PC-3 (cell line): ENCODE measurements at regions of chr17 and their contacts with region 1.

Region 1: GRCh38 chr17:6215071-6216035 is 145.2 kb downstream of the WSCD1 start:
- DNase-seq: no peak
- ATAC-seq: no peak
- H3K4me3 ChIP-seq: no peak overlapping the region
- H3K27ac ChIP-seq: no peak overlapping the region
- H3K4me1 ChIP-seq: no peaks in the 10 kb centered on the region
- H3K27me3 ChIP-seq: no peaks in the 10 kb centered on the region
- CTCF ChIP-seq: no peak

Region 2: GRCh38 chr17:6137716-6138502 is 77.4 kb before region 1 on chr17:
- CTCF ChIA-PET with region 1: no interaction called
- POLR2A ChIA-PET with region 1: no interaction called
- intact Hi-C with region 1: no loop called
- DNase-seq: no peak
- ATAC-seq: no peak
- H3K4me3 ChIP-seq: no peak overlapping the region
- H3K27ac ChIP-seq: no peak overlapping the region
- H3K4me1 ChIP-seq: no peaks in the 10 kb centered on the region
- H3K27me3 ChIP-seq: no peaks in the 10 kb centered on the region
- CTCF ChIP-seq: no peak

Region 3: GRCh38 chr17:6191405-6192324 is 23.7 kb before region 1 on chr17:
- CTCF ChIA-PET with region 1: no interaction called
- POLR2A ChIA-PET with region 1: no interaction called
- intact Hi-C with region 1: no loop called
- DNase-seq: no peak
- ATAC-seq: no peak
- H3K4me3 ChIP-seq: no peak overlapping the region
- H3K27ac ChIP-seq: no peak overlapping the region
- H3K4me1 ChIP-seq: peaks cover 27% of the 10 kb centered on the region
- H3K27me3 ChIP-seq: no peaks in the 10 kb centered on the region
- CTCF ChIP-seq: no peak

Region 4: GRCh38 chr17:6366221-6366666 is 150.9 kb after region 1 on chr17:
- CTCF ChIA-PET with region 1: no interaction called
- POLR2A ChIA-PET with region 1: no interaction called
- intact Hi-C with region 1: loop called (anchors 5 kb)
- DNase-seq: peak; percentile 75
- ATAC-seq: peak; percentile 53
- H3K4me3 ChIP-seq: peak overlapping the region; percentile 48
- H3K27ac ChIP-seq: peak overlapping the region; percentile 98
- H3K4me1 ChIP-seq: peaks cover 25% of the 10 kb centered on the region
- H3K27me3 ChIP-seq: no peaks in the 10 kb centered on the region
- CTCF ChIP-seq: no peak